Psoas muscle (tissue), 8 donors: ENCODE measurements at regions of chr9 and their contacts with region 1.

Region 1: DNA sequence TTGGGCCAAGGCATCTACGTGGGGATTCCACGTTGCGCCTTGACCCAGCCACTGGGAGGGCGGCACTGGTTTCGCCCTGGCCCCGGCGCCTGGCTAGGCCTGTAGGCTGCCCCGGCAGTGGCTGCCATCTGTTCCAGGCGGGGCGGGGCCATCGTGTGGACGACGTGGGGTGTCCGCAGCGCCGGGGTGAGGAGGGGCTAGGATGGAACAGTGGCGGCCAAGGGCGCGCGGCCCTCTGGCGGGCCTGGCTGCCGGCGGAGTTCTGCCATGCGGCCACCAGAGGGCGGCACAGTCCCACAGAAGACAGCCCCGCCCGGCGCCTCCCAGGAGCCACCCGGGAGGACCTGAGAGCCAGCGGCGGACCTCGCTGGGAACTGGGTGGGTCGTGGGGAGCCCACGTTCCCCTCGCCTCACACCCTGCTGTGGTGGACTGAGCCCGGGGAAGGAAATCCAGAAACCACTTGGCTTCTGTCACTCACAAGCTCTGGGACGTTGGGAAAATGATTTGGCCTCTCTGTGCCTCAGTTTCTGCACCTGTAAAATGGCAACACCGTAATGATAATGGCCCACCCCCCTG is 22.6 kb upstream of the RAPGEF1 start:
- DNase-seq: peak; percentile 79 to 87
- ATAC-seq: peak; percentile 91 to 96 (median 95)
- H3K4me3 ChIP-seq: no peak overlapping the region
- H3K27ac ChIP-seq: no peak overlapping the region
- H3K4me1 ChIP-seq: peaks cover 6% of the 10 kb centered on the region
- H3K27me3 ChIP-seq: peaks cover 0 to 3% (median 2%) of the 10 kb centered on the region in 3 donors
- CTCF ChIP-seq: peak; percentile 97

Region 2: GRCh38 chr9:131714161-131714646 is 48.2 kb before region 1 on chr9:
- intact Hi-C with region 1: no loop called
- DNase-seq: peak; percentile 64 to 75
- ATAC-seq: peak; percentile 6 to 21 (median 17)
- H3K4me3 ChIP-seq: no peak overlapping the region
- H3K27ac ChIP-seq: peak overlapping the region; percentile 68
- H3K4me1 ChIP-seq: peaks cover 59% of the 10 kb centered on the region
- H3K27me3 ChIP-seq: no peaks in the 10 kb centered on the region
- CTCF ChIP-seq: no peak

Region 3: DNA sequence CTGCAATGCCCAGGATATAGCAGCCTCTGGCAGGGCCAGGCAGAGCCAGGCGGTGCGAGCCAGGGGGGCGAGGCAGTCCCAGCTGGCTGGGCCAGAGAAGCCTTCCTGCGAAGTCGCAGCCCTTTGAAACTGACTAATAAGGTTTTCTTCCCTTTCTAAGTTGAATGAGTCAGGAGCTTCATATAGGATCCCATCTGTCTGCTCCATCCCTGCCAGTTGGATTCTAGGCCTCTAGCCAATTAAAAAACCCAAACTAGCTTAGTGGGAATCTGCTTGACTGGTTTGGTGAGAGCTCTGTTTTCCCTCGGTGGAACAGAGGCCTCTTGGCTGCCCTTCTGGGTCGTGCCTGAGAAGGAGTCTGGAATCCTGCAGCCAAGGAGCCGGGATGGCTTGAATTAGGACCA is 47.5 kb after region 1 on chr9:
- intact Hi-C with region 1: no loop called
- DNase-seq: no peak
- ATAC-seq: no peak
- H3K4me3 ChIP-seq: no peak overlapping the region
- H3K27ac ChIP-seq: no peak overlapping the region
- H3K4me1 ChIP-seq: no peaks in the 10 kb centered on the region
- H3K27me3 ChIP-seq: peaks cover 0 to 77% (median 26%) of the 10 kb centered on the region in 3 donors
- CTCF ChIP-seq: no peak

Region 4: DNA sequence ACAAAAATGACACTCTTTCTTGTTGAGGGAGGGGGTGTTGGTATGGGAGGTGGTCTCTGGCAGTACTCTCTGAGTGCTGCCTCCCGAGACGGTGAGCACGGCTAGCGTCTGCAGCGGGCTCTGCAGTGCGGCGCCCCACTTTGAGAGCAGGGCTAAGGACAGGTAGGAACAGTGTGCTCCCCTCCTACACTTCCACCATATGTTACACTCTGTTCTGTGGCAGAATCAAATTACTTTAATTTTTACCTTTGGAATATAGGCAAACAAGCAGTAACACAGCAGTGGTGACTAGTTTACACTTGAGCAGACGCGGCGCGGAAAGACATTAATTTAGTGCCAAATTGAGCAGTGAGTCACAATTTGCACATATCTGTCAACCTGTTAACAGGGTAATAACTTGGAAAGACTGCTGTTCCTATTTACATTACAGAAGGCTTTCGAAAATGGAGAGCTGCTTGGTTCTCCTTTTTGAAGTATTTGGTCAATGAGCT is 181.0 kb after region 1 on chr9:
- intact Hi-C with region 1: no loop called
- DNase-seq: no peak
- ATAC-seq: no peak
- H3K4me3 ChIP-seq: no peak overlapping the region
- H3K27ac ChIP-seq: no peak overlapping the region
- H3K4me1 ChIP-seq: no peaks in the 10 kb centered on the region
- H3K27me3 ChIP-seq: no peaks in the 10 kb centered on the region
- CTCF ChIP-seq: no peak

Region 5: GRCh38 chr9:132169672-132170392 is 407.4 kb after region 1 on chr9:
- intact Hi-C with region 1: loop called in 1 of 2 experiments (anchors 10 kb)
- DNase-seq: peak; percentile 47 to 80
- ATAC-seq: peak; percentile 76 to 90 (median 88)
- H3K4me3 ChIP-seq: no peak overlapping the region
- H3K27ac ChIP-seq: no peak overlapping the region
- H3K4me1 ChIP-seq: peaks cover 2% of the 10 kb centered on the region
- H3K27me3 ChIP-seq: peaks cover 3 to 71% (median 19%) of the 10 kb centered on the region in 3 donors
- CTCF ChIP-seq: peak; percentile 90

Region 6: GRCh38 chr9:132235946-132236661 is 473.7 kb after region 1 on chr9:
- intact Hi-C with region 1: loop called (anchors 5 kb)
- DNase-seq: peak; percentile 69 to 87
- ATAC-seq: peak; percentile 47 to 79 (median 66)
- H3K4me3 ChIP-seq: no peak overlapping the region
- H3K27ac ChIP-seq: no peak overlapping the region
- H3K4me1 ChIP-seq: no peaks in the 10 kb centered on the region
- H3K27me3 ChIP-seq: peaks cover 0 to 54% (median 12%) of the 10 kb centered on the region in 3 donors
- CTCF ChIP-seq: peak; percentile 95

Region 7: DNA sequence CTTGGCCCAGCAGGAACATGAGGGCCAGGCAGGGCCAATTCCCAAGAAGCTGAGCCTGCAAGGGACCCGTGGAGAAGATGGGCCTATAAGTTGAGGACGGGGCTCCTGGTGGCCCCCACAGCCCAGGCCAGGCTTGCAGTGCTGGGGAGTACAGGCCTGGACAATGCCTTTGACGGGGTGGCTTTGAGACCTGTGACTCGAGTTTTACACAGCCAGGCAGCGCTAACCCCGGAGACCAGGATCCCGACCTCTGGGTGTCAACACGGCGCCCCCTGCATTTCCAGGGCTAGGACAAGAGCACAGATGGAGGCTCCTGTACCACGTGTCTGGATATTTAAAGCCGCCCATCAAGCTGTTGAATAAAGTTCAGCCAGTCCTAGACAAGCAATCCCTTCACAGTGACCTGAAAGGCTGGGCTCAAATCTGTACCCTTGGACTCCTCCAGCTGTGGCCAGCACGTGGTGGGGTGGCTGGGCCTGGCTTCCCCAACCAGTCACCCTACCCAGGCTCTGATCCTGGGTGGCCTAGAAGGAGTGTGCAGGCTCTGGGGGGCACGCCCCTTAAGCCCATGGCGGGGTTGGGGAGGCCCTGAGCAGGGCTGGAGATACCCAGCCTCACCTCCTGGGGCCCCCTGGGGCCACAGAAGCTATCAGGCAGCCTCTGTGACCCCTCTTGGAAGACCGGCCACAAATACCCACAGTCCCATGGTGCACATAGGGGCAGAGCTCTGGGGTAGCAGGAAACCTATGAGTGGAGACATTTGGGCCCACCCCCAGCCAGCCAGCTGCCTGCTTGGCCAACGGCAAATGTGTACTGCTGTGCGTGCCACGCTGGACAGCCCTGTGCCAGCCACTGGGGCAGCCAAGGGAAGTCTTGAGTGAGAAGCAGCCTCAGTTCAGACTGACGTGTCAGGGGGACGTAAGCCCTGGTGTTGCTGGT is 488.1 kb after region 1 on chr9:
- intact Hi-C with region 1: loop called (anchors 2 to 5 kb)
- DNase-seq: peak in 1 of 2 donors; percentile 47
- ATAC-seq: no peak
- H3K4me3 ChIP-seq: no peak overlapping the region
- H3K27ac ChIP-seq: no peak overlapping the region
- H3K4me1 ChIP-seq: no peaks in the 10 kb centered on the region
- H3K27me3 ChIP-seq: peaks cover 0 to 33% (median 9%) of the 10 kb centered on the region in 3 donors
- CTCF ChIP-seq: no peak